GM18951 (cell line): ENCODE measurements at regions of chr3 and their contacts with region 1.

Region 1: DNA sequence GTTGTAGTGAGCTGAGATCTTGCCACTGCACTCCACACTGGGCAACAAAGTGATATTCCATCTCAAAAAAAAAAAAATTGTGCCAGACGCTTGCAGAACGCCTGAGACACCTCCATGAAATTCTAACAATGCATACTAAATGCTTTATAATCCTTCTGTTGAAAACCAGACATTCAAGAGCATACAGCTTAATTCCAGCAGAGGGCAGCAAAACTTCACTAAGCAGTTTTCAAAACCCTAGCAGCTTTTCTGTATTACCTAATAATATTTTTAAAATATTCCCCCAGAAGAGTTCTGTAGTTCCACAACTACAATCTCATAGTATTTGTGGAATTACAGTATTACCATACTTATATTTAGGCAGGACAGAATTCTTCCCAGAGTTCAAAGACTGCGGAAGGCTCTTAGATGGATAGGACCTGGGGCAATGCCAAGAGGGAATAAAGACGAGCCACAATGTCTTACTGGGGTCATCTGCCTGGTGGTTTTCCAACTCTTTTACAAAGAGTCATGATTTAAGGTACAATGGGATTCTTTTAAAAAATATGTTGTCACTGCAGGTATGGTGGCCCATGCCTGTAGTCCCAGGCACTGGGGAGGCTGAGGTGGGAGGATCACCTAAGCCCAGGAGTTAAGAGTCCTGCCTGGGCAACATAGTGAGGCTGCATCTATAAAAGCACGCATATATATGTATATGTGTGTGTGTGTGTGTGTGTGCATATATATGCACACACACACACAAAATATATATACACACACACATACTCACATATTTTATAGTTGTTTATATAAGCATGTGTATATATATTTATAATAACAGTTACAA is 19.6 kb upstream of the TASOR start:
- POLR2A ChIP-seq: no peak

Region 2: GRCh38 chr3:56629047-56629446 is 73.7 kb before region 1 on chr3:
- in situ Hi-C with region 1: no loop called
- POLR2A ChIP-seq: no peak

Region 3: GRCh38 chr3:56869157-56869889 is 166.6 kb after region 1 on chr3:
- in situ Hi-C with region 1: no loop called
- POLR2A ChIP-seq: no peak

Region 4: DNA sequence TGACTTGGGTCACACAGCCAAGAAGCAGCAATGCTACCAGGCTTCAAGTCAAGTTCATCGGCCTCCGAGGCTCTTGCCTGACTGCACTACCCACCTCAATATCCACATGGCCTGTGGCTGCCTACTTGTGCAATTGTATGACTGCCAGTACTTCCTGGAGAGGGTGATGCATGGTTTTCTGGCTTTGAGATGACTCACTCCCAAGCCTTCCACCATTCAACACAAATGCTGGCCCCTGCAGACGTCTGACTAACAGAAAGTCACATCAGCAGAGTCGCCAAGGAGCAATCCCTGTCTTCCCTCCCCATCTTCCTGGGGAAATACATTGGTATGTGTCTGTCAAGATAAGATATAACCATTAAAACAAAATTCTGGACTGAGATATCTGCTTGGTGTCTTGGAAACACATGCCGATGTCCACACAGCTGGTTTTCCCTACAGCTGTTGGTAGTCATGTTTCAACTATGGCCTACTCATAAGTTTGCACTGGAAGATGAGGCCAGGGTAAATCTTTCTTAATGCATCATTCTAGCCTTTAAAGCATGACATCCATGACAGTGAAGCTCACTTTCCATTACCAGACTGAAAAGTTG is 278.2 kb after region 1 on chr3:
- in situ Hi-C with region 1: loop called (anchors 5 kb)
- POLR2A ChIP-seq: no peak